Adrenal gland (tissue), 19 donors: ENCODE measurements at regions of chr21 and their contacts with region 1.

Region 1: DNA sequence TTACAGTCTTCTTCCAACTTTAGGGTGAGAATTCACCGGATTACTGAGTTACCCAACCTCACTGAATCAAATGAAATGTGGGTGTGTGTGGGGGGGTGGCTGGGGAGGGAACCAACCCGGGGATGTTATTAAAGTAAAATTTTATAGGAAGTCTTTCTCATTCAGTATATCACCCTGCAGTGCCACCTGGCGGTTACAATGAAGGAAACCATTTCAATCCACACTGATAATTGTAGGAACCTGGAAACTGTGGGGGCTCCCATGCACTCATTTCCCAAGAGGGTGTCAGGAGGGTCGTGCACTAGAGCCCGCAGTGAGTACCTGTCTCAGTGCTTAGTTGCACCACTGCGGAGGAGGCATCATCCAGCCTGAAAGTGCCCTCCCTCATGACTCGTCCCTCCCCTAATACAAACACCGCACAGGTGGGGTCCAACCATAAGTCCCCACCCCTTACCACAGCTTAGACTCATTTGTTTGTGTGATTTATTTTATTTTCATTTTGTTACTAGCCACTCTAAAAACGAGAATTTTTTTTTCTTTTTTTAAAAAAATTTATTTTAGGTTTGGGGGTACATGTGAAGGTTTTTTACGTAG is 29.1 kb upstream of the IGSF5 start:
- DNase-seq: peak; percentile 30 to 86 (median 63)
- H3K4me3 ChIP-seq: no peak overlapping the region
- H3K27ac ChIP-seq: no peak overlapping the region
- H3K4me1 ChIP-seq: no peaks in the 10 kb centered on the region
- H3K27me3 ChIP-seq: no peaks in the 10 kb centered on the region
- CTCF ChIP-seq: peak; percentile 33 to 72 (median 57)
- POLR2A ChIP-seq: no peak

Region 2: GRCh38 chr21:39518138-39518846 is 197.6 kb before region 1 on chr21:
- intact Hi-C with region 1: loop called (anchors 2 to 5 kb)
- DNase-seq: peak in 5 of 7 donors; percentile 44 to 74 (median 48)
- H3K4me3 ChIP-seq: no peak overlapping the region
- H3K27ac ChIP-seq: no peak overlapping the region
- H3K4me1 ChIP-seq: peaks cover 0 to 7% of the 10 kb centered on the region in 2 donors
- H3K27me3 ChIP-seq: no peaks in the 10 kb centered on the region
- CTCF ChIP-seq: peak; percentile 75 to 94 (median 90)
- POLR2A ChIP-seq: no peak

Region 3: DNA sequence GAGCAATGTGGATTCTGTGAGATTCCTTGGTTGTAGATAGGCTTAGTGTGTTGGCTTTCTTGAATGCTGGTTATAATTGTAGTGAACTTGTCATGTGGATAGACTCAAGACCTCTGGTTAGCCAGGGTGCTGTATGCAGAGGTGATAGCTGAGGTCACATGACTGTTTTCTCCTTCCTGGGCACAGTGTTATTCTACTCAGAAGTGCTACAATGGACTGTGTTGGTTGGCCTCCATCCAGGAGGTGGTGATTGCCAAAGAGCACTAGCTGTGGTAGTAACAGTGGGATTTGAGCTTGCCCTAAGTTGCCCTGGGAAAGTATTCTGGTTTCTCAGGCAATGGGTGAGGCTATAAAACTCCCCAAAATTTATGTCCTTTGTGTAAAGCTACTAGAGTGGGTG is 192.5 kb before region 1 on chr21:
- intact Hi-C with region 1: loop called (anchors 2 to 5 kb)
- DNase-seq: peak in 2 of 7 donors; percentile 33 to 47
- H3K4me3 ChIP-seq: no peak overlapping the region
- H3K27ac ChIP-seq: no peak overlapping the region
- H3K4me1 ChIP-seq: peaks cover 0 to 16% of the 10 kb centered on the region in 2 donors
- H3K27me3 ChIP-seq: no peaks in the 10 kb centered on the region
- CTCF ChIP-seq: no peak
- POLR2A ChIP-seq: no peak